Transverse colon (tissue), 4 donors: ENCODE measurements at regions of chr1 and their contacts with region 1.

Region 1: DNA sequence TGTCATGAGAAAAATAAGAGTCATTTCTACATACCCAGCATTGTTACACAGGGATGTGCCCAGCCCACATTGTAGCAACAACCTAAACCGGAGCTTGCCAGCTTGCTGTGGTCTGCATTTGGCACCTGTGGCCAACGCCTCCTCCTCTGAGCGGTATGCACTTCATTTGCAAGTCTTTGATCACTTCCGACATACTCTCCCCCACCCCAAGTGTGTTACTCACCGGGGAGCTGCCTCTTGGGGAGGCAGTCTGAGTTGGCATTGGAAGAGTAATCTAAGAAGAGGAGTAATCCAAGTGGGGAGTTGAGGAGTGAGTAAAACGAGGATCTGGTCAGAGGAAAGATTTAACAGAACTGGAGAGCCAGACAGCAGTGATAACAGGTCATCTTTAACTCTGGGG is 3.8 kb downstream of the BCL9 start:
- DNase-seq: peak; percentile 55
- H3K4me3 ChIP-seq: no peak overlapping the region
- H3K27ac ChIP-seq: no peak overlapping the region
- H3K4me1 ChIP-seq: peaks cover 5 to 33% (median 24%) of the 10 kb centered on the region in 4 donors
- H3K27me3 ChIP-seq: no peaks in the 10 kb centered on the region
- CTCF ChIP-seq: no peak
- EP300 ChIP-seq: no peak
- POLR2A ChIP-seq: no peak

Region 2: GRCh38 chr1:147599362-147600118 is 54.4 kb after region 1 on chr1:
- in situ Hi-C with region 1: loop called in 2 of 4 experiments (anchors 5 to 10 kb)
- intact Hi-C with region 1: loop called (anchors 10 kb)
- DNase-seq: peak; percentile 98
- H3K4me3 ChIP-seq: peak overlapping the region; percentile 47 to 65 (median 60)
- H3K27ac ChIP-seq: peak overlapping the region; percentile 86 to 92 (median 90)
- H3K4me1 ChIP-seq: peaks cover 7 to 13% (median 10%) of the 10 kb centered on the region in 4 donors
- H3K27me3 ChIP-seq: no peaks in the 10 kb centered on the region
- CTCF ChIP-seq: peak in 1 of 5 experiments; percentile 23
- EP300 ChIP-seq: no peak
- POLR2A ChIP-seq: peak; percentile 68

Region 3: DNA sequence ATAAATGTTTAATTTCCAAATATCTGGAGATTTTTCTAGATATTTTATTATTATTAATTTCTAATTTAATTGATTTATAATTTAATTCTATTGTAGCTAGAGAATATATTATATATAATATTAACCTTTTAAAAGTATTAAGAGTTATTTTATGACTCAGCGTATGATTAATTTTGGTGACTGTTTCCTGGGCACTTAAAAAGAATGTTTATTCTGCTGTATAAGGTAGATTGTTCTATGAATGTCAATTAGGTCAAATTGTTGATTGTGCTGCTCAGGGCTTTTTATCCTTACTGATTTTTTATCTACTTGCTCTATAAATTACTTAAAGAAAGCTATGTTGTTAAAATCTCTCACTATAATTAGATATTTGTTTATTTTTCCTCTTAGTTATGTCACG is 337.4 kb after region 1 on chr1:
- in situ Hi-C with region 1: no loop called
- intact Hi-C with region 1: no loop called
- DNase-seq: no peak
- H3K4me3 ChIP-seq: no peak overlapping the region
- H3K27ac ChIP-seq: no peak overlapping the region
- H3K4me1 ChIP-seq: no peaks in the 10 kb centered on the region
- H3K27me3 ChIP-seq: no peaks in the 10 kb centered on the region
- CTCF ChIP-seq: no peak
- EP300 ChIP-seq: no peak
- POLR2A ChIP-seq: no peak